Endothelial cell of umbilical vein (primary cell): ENCODE measurements at regions of chr12 and their contacts with region 1.

Region 1: GRCh38 chr12:123772074-123772473 is 10.0 kb downstream of the DNAH10 start:
- DNase-seq: no peak
- H3K4me3 ChIP-seq: no peak overlapping the region
- H3K27ac ChIP-seq: no peak overlapping the region
- H3K4me1 ChIP-seq: no peaks in the 10 kb centered on the region
- H3K27me3 ChIP-seq: peaks cover 6 to 9% of the 10 kb centered on the region in 2 experiments
- CTCF ChIP-seq: no peak
- POLR2A ChIP-seq: no peak

Region 2: DNA sequence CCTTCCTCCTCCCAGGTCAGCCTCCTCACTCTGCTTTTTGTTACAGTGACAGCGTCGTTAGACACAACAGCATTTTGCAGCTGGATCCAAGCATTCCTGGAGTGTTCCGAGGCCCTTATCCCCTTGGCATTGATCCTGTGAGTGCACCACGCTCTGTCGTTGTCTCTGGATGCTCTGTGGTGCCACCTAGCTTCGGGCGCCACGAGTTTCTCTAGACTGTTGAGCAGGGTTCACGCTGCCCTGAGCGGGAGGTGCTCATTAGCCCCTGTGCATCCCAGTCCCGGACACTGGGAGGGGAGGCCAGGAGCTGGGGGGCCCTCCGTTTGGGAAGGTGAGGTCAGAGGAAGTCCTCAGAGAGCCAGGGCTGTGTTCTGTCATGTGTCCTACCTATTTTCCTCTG is 27.2 kb before region 1 on chr12:
- CTCF ChIA-PET with region 1: no interaction called
- POLR2A ChIA-PET with region 1: no interaction called
- dilution Hi-C with region 1: no loop called
- intact Hi-C with region 1: loop called (anchors 1 kb)
- DNase-seq: no peak
- H3K4me3 ChIP-seq: no peak overlapping the region
- H3K27ac ChIP-seq: no peak overlapping the region
- H3K4me1 ChIP-seq: no peaks in the 10 kb centered on the region
- H3K27me3 ChIP-seq: no peaks in the 10 kb centered on the region
- CTCF ChIP-seq: no peak
- POLR2A ChIP-seq: no peak

Region 3: DNA sequence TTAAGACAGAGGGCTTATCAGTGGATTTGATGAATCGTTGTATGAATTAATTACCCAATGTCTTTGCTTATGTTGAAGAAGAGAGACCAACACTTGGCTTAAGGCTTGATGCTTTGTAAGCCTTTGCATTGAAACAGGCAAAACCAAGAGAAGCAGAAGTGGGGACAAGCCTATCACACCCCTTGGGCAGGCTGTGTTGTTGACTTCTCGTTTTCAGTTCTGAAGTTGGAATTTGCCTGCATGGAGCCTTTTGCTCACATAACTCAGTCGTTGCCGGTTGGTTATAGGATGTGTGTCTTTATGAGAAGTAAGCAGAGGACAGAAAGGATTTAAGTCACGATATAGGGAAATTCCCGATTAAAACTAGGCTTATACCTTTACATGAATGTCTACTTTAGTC is 105.9 kb after region 1 on chr12:
- CTCF ChIA-PET with region 1: no interaction called
- POLR2A ChIA-PET with region 1: no interaction called
- dilution Hi-C with region 1: no loop called
- intact Hi-C with region 1: no loop called
- DNase-seq: no peak
- H3K4me3 ChIP-seq: no peak overlapping the region
- H3K27ac ChIP-seq: no peak overlapping the region
- H3K4me1 ChIP-seq: no peaks in the 10 kb centered on the region
- H3K27me3 ChIP-seq: no peaks in the 10 kb centered on the region
- CTCF ChIP-seq: no peak
- POLR2A ChIP-seq: no peak